Head of caudate nucleus (tissue), 42 donors: ENCODE measurements at regions of chr5 and their contacts with region 1.

Region 1: GRCh38 chr5:68215208-68215897 is at the start of gene PIK3R1:
- DNase-seq: peak; percentile 85 to 99 (median 96)

Region 2: DNA sequence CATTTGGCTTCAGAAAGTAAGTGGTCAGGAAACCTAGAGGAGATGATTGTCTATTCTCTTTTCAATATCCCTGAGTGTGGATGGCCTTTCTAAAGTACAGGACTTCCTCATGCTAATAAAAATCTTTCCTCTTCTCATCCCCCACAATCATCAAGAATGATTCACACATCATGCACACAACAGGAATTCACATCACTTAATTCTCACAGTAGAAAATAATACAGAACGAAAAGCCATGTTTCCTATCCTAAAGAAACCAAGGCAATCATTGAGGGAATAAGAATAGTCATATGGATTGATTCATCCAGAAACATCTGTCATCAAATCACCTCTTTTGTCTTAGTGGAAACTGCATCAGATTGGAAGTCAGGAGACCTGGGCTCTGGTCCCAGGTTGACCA is 202.9 kb before region 1 on chr5:
- intact Hi-C with region 1: loop called (anchors 10 kb)
- DNase-seq: no peak

Region 3: DNA sequence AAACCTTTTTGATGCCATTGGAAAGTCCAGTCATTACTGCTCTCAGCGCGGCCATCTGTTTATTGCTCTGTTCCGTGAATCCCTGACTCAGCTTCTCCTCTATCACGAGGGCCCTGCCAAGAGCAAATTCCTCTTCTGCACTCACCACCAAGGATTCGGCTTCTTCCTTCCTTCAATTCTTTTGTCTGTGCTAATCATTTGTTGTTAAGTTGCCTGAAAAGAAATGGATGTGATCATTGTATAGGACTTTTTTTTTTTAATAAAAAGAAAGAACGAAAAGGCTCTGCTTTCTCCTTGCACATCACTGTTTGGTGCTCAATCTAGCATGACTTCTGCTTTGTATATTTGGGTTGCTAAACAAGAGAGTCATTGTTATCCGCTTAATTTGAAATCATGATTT is 128.5 kb before region 1 on chr5:
- intact Hi-C with region 1: loop called (anchors 10 kb)
- DNase-seq: peak in 41 of 42 donors; percentile 7 to 84 (median 54)